ENCODE measurements at regions of chr10 and their contacts with region 1.

Region 1: GRCh38 chr10:125343118-125343925 is 183.0 kb upstream of the CTBP2 start:
- DNase-seq: no peak
- H3K4me3 ChIP-seq: no peak overlapping the region
- H3K27ac ChIP-seq: no peak overlapping the region
- H3K4me1 ChIP-seq: no peaks in the 10 kb centered on the region
- H3K27me3 ChIP-seq: peaks cover 0 to 4% (median 0%) of the 10 kb centered on the region in 4 donors
- CTCF ChIP-seq: peak in 5 of 6 experiments; percentile 40 to 66 (median 54)
- POLR2A ChIP-seq: no peak

Region 2: DNA sequence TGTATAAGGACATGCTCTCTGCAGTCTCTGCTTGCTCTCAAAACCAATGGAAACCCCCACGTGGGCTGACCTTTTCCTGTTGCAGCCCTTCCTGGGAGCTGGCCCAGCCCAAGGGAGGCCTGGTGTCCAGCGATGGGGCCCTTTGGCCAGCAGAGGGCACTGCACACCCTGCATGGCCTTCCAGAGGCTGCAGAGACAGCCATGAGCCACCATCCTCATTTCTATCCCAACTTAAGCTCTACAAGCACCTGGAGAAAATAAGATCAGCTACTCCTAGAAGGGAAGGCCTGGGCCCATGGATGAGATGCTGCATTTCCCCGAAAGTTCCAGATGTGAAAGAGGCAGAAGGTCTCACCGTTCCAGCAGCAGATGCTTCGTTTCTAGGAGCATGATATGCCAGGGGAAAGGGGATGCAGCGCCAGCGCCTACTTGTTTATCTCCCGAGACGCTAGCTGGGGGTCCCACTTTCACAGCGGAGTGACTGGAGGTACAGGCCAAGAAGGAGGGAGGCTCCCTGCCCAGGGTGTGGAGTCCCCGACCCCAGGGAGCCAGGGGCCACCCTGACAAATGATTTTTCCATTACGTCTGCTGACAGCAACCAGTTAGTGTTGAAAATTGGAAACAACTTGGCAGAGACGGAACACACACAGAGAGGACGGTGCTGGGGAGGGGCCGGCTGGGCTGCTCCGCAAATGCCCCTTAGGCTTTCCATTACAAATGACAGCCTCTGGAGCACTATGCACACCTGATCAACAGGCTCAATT is 295.0 kb before region 1 on chr10:
- intact Hi-C with region 1: loop called (anchors 10 kb)
- DNase-seq: no peak
- H3K4me3 ChIP-seq: peak overlapping the region in 1 of 4 donors; percentile 5
- H3K27ac ChIP-seq: peak overlapping the region in 1 of 4 donors; percentile 48
- H3K4me1 ChIP-seq: peaks cover 0 to 69% (median 37%) of the 10 kb centered on the region in 3 donors
- H3K27me3 ChIP-seq: no peaks in the 10 kb centered on the region
- CTCF ChIP-seq: peak; percentile 55 to 95 (median 92)
- POLR2A ChIP-seq: no peak

Region 3: GRCh38 chr10:126754966-126755365 is 1411.6 kb after region 1 on chr10:
- intact Hi-C with region 1: no loop called
- DNase-seq: no peak
- H3K4me3 ChIP-seq: no peak overlapping the region
- H3K27ac ChIP-seq: no peak overlapping the region
- H3K4me1 ChIP-seq: no peaks in the 10 kb centered on the region
- H3K27me3 ChIP-seq: peaks cover 0 to 5% (median 0%) of the 10 kb centered on the region in 4 donors
- CTCF ChIP-seq: no peak
- POLR2A ChIP-seq: no peak

Measured in esophagus squamous epithelium (tissue), 5 donors.